CD4-positive, alpha-beta memory T cell (primary cell): ENCODE measurements at regions of chr13 and their contacts with region 1.

Region 1: GRCh38 chr13:49996951-49997895 is at the start of gene TRIM13:
- DNase-seq: peak; percentile 81 to 85 (median 84)
- H3K4me3 ChIP-seq: peak within 1 kb of the TSS; percentile 82 to 96
- H3K4me3 Mint-ChIP-seq: peak within 1 kb of the TSS; percentile 89 to 94 (median 90)
- H3K27ac ChIP-seq: peak within 1 kb of the TSS; percentile 83
- H3K27ac Mint-ChIP-seq: peak within 1 kb of the TSS; percentile 84 to 93 (median 91)
- H3K4me1 ChIP-seq: peaks cover 59% of the 10 kb centered on the region
- H3K4me1 Mint-ChIP-seq: peaks cover 30 to 63% (median 43%) of the 10 kb centered on the region in 4 donors
- H3K27me3 ChIP-seq: no peaks in the 10 kb centered on the region
- H3K27me3 Mint-ChIP-seq: no peaks in the 10 kb centered on the region
- total RNA-seq, gene TRIM13: 30.3 to 32.4 TPM

Region 2: DNA sequence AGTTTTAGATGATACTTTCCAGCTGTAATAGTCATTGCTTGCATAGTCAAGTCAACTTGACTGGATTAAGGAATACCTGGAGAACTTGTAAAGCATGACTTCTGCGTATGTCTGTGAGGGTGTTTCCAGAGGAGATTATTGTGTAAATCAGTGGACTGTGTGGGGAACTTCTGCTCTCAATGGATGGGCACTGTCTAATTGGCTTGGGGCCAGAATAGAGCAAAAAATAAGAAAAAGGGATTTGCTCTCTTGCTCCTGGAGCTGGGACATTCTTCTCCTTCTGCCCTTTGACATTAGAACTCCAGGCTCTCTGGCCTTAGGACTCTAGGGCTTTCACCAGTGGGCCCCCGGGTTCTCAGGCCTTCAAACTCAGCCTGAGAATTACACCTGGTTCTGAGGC is 1310.4 kb before region 1 on chr13:
- CTCF ChIA-PET with region 1: no interaction called
- POLR2A ChIA-PET with region 1: no interaction called
- intact Hi-C with region 1: no loop called
- DNase-seq: no peak
- H3K4me3 ChIP-seq: no peak overlapping the region
- H3K4me3 Mint-ChIP-seq: no peak overlapping the region
- H3K27ac ChIP-seq: no peak overlapping the region
- H3K27ac Mint-ChIP-seq: peak overlapping the region in 1 of 7 donors; percentile 11
- H3K4me1 ChIP-seq: no peaks in the 10 kb centered on the region
- H3K4me1 Mint-ChIP-seq: peaks cover 0 to 2% (median under 1%) of the 10 kb centered on the region in 4 donors
- H3K27me3 ChIP-seq: no peaks in the 10 kb centered on the region
- H3K27me3 Mint-ChIP-seq: no peaks in the 10 kb centered on the region

Region 3: GRCh38 chr13:48975856-48976575 is 1021.2 kb before region 1 on chr13 and contains the start of gene FNDC3A:
- CTCF ChIA-PET with region 1: no interaction called
- POLR2A ChIA-PET with region 1: no interaction called
- intact Hi-C with region 1: loop called (anchors 5 kb)
- DNase-seq: peak; percentile 88 to 92 (median 89)
- H3K4me3 ChIP-seq: peak within 1 kb of the TSS; percentile 81 to 83
- H3K4me3 Mint-ChIP-seq: peak within 1 kb of the TSS; percentile 94 to 98 (median 96)
- H3K27ac ChIP-seq: peak within 1 kb of the TSS; percentile 90
- H3K27ac Mint-ChIP-seq: peak within 1 kb of the TSS; percentile 90 to 99 (median 99)
- H3K4me1 ChIP-seq: peaks cover 51% of the 10 kb centered on the region
- H3K4me1 Mint-ChIP-seq: peaks cover 28 to 55% (median 40%) of the 10 kb centered on the region in 4 donors
- H3K27me3 ChIP-seq: no peaks in the 10 kb centered on the region
- H3K27me3 Mint-ChIP-seq: peaks cover 0 to 3% of the 10 kb centered on the region in 2 donors
- total RNA-seq, gene FNDC3A: 43.7 to 44.4 TPM

Region 4: GRCh38 chr13:49927755-49928154 is 69.5 kb before region 1 on chr13:
- CTCF ChIA-PET with region 1: no interaction called
- POLR2A ChIA-PET with region 1: no interaction called
- intact Hi-C with region 1: no loop called
- DNase-seq: no peak
- H3K4me3 ChIP-seq: no peak overlapping the region
- H3K4me3 Mint-ChIP-seq: no peak overlapping the region
- H3K27ac ChIP-seq: no peak overlapping the region
- H3K27ac Mint-ChIP-seq: no peak overlapping the region
- H3K4me1 ChIP-seq: no peaks in the 10 kb centered on the region
- H3K4me1 Mint-ChIP-seq: no peaks in the 10 kb centered on the region
- H3K27me3 ChIP-seq: no peaks in the 10 kb centered on the region
- H3K27me3 Mint-ChIP-seq: no peaks in the 10 kb centered on the region

Region 5: GRCh38 chr13:50016444-50016843 is 19.2 kb after region 1 on chr13:
- CTCF ChIA-PET with region 1: interaction called, 15 read pairs
- POLR2A ChIA-PET with region 1: interaction called, 10 read pairs
- intact Hi-C with region 1: no loop called
- DNase-seq: no peak
- H3K4me3 ChIP-seq: no peak overlapping the region
- H3K4me3 Mint-ChIP-seq: no peak overlapping the region
- H3K27ac ChIP-seq: no peak overlapping the region
- H3K27ac Mint-ChIP-seq: peak overlapping the region in 1 of 7 donors; percentile 4
- H3K4me1 ChIP-seq: peaks cover 12% of the 10 kb centered on the region
- H3K4me1 Mint-ChIP-seq: peaks cover 27 to 44% (median 41%) of the 10 kb centered on the region in 4 donors
- H3K27me3 ChIP-seq: no peaks in the 10 kb centered on the region
- H3K27me3 Mint-ChIP-seq: no peaks in the 10 kb centered on the region

Region 6: GRCh38 chr13:50268500-50268899 is 271.3 kb after region 1 on chr13:
- CTCF ChIA-PET with region 1: interaction called, 3 read pairs
- POLR2A ChIA-PET with region 1: interaction called, 4 read pairs
- intact Hi-C with region 1: loop called (anchors 5 kb)
- DNase-seq: no peak
- H3K4me3 ChIP-seq: no peak overlapping the region
- H3K4me3 Mint-ChIP-seq: no peak overlapping the region
- H3K27ac ChIP-seq: no peak overlapping the region
- H3K27ac Mint-ChIP-seq: peak overlapping the region in 1 of 7 donors; percentile 42
- H3K4me1 ChIP-seq: no peaks in the 10 kb centered on the region
- H3K4me1 Mint-ChIP-seq: peaks cover 0 to 7% (median 2%) of the 10 kb centered on the region in 4 donors
- H3K27me3 ChIP-seq: no peaks in the 10 kb centered on the region
- H3K27me3 Mint-ChIP-seq: no peaks in the 10 kb centered on the region

Region 7: GRCh38 chr13:50531917-50532899 is 535.0 kb after region 1 on chr13:
- CTCF ChIA-PET with region 1: interaction called, 6 read pairs
- POLR2A ChIA-PET with region 1: interaction called, 9 read pairs
- intact Hi-C with region 1: loop called (anchors 5 kb)
- DNase-seq: peak in 2 of 5 donors; percentile 14 to 18
- H3K4me3 ChIP-seq: no peak overlapping the region
- H3K4me3 Mint-ChIP-seq: no peak overlapping the region
- H3K27ac ChIP-seq: no peak overlapping the region
- H3K27ac Mint-ChIP-seq: no peak overlapping the region
- H3K4me1 ChIP-seq: peaks cover 18% of the 10 kb centered on the region
- H3K4me1 Mint-ChIP-seq: peaks cover 11 to 26% (median 22%) of the 10 kb centered on the region in 4 donors
- H3K27me3 ChIP-seq: no peaks in the 10 kb centered on the region
- H3K27me3 Mint-ChIP-seq: no peaks in the 10 kb centered on the region

Region 8: GRCh38 chr13:50911937-50912795 is 914.9 kb after region 1 on chr13:
- CTCF ChIA-PET with region 1: interaction called, 33 read pairs
- POLR2A ChIA-PET with region 1: interaction called, 58 read pairs
- intact Hi-C with region 1: loop called (anchors 1 kb)
- DNase-seq: peak; percentile 82 to 90 (median 83)
- H3K4me3 ChIP-seq: peak overlapping the region; percentile 73 to 92
- H3K4me3 Mint-ChIP-seq: peak overlapping the region; percentile 82 to 98 (median 94)
- H3K27ac ChIP-seq: peak overlapping the region; percentile 79
- H3K27ac Mint-ChIP-seq: peak overlapping the region; percentile 89 to 98 (median 95)
- H3K4me1 ChIP-seq: peaks cover 69% of the 10 kb centered on the region
- H3K4me1 Mint-ChIP-seq: peaks cover 43 to 59% (median 50%) of the 10 kb centered on the region in 4 donors
- H3K27me3 ChIP-seq: no peaks in the 10 kb centered on the region
- H3K27me3 Mint-ChIP-seq: peaks cover 0 to under 1% of the 10 kb centered on the region in 2 donors